ENCODE measurements at regions of chr7 and their contacts with region 1.

Region 1: GRCh38 chr7:44999245-45000095 is 531 bp upstream of the CCM2 start:
- DNase-seq: peak; percentile 97 to 99 (median 99)
- ATAC-seq: peak; percentile 81
- H3K4me3 ChIP-seq: peak overlapping the region; percentile 59 to 75
- H3K4me3 Mint-ChIP-seq: peak overlapping the region; percentile 99
- H3K27ac ChIP-seq: peak overlapping the region; percentile 70
- H3K27ac Mint-ChIP-seq: peak overlapping the region; percentile 98
- H3K4me1 ChIP-seq: peaks cover 36% of the 10 kb centered on the region
- H3K4me1 Mint-ChIP-seq: peaks cover 51% of the 10 kb centered on the region
- H3K27me3 ChIP-seq: no peaks in the 10 kb centered on the region
- H3K27me3 Mint-ChIP-seq: no peaks in the 10 kb centered on the region
- CTCF ChIP-seq: no peak

Region 2: DNA sequence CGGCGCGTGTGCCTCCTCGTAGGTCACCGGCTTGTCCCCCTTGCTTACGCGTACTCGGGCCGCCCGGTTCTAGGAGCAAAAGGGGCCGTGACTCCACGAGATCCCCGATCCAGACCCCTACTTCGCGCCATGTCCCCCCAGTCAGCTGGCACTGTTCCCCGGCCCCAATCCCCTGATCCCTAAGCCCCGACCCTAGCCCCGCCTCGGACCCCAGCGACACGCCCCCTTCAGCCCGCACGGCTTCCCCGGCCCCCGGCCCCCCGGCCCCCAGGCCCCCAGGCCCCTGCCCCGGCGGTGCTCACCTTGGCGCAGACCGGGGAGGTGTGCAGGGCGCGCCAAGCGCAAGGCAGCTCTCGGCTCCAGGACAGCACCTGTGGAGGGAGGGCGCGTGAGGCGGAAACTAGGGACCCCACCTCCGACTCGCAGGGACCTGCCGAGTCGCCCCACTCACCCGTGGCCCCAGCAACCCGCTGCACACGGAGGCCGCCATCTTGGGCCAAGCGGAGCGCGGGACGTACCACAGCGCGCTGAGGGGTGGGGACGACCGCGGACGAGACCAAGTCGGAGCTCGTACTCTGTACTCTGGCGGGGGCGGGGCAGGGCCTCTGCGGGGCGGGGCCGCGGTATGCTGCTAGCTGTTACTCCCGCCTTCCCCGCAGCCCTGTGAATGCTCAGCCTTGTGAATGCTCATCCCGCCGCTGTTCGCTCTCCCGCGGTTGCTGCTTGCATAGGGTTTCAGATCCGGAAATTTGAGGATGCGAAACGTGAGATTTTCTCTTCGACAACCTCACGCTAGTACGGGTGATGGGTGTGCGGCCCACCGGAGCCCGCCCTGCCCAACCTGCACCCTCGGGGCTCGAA is 1130.2 kb before region 1 on chr7 and contains the start of gene MRPS24:
- CTCF ChIA-PET with region 1: no interaction called
- POLR2A ChIA-PET with region 1: no interaction called
- intact Hi-C with region 1: no loop called
- DNase-seq: peak; percentile 91 to 97 (median 95)
- ATAC-seq: peak; percentile 100
- H3K4me3 ChIP-seq: peak within 1 kb of the TSS; percentile 69 to 76
- H3K4me3 Mint-ChIP-seq: peak within 1 kb of the TSS; percentile 94
- H3K27ac ChIP-seq: peak within 1 kb of the TSS; percentile 50 to 69
- H3K27ac Mint-ChIP-seq: peak within 1 kb of the TSS; percentile 93
- H3K4me1 ChIP-seq: peaks cover 14% of the 10 kb centered on the region
- H3K4me1 Mint-ChIP-seq: peaks cover 23% of the 10 kb centered on the region
- H3K27me3 ChIP-seq: no peaks in the 10 kb centered on the region
- H3K27me3 Mint-ChIP-seq: no peaks in the 10 kb centered on the region
- CTCF ChIP-seq: no peak
- total RNA-seq, gene MRPS24: 61.7 to 74.4 TPM

Region 3: GRCh38 chr7:44123190-44124003 is 876.1 kb before region 1 on chr7 and contains the start of gene POLD2:
- CTCF ChIA-PET with region 1: no interaction called
- POLR2A ChIA-PET with region 1: no interaction called
- intact Hi-C with region 1: loop called in 1 of 2 experiments (anchors 10 kb)
- DNase-seq: peak; percentile 93 to 98 (median 97)
- ATAC-seq: peak; percentile 98
- H3K4me3 ChIP-seq: peak within 1 kb of the TSS; percentile 78 to 83
- H3K4me3 Mint-ChIP-seq: peak within 1 kb of the TSS; percentile 93
- H3K27ac ChIP-seq: peak within 1 kb of the TSS; percentile 75 to 79
- H3K27ac Mint-ChIP-seq: peak within 1 kb of the TSS; percentile 66
- H3K4me1 ChIP-seq: peaks cover 12% of the 10 kb centered on the region
- H3K4me1 Mint-ChIP-seq: peaks cover 34% of the 10 kb centered on the region
- H3K27me3 ChIP-seq: no peaks in the 10 kb centered on the region
- H3K27me3 Mint-ChIP-seq: no peaks in the 10 kb centered on the region
- CTCF ChIP-seq: no peak
- total RNA-seq, gene POLD2: 44.0 to 48.9 TPM

Region 4: GRCh38 chr7:44885394-44886317 is 113.8 kb before region 1 on chr7 and contains the start of gene PURB:
- CTCF ChIA-PET with region 1: interaction called, 3 read pairs
- POLR2A ChIA-PET with region 1: interaction called, 5 read pairs
- intact Hi-C with region 1: loop called in 1 of 2 experiments (anchors 1 kb)
- DNase-seq: peak; percentile 94 to 99 (median 97)
- ATAC-seq: peak; percentile 86
- H3K4me3 ChIP-seq: peak within 1 kb of the TSS; percentile 64 to 67
- H3K4me3 Mint-ChIP-seq: peak within 1 kb of the TSS; percentile 92
- H3K27ac ChIP-seq: peak within 1 kb of the TSS; percentile 98 to 100
- H3K27ac Mint-ChIP-seq: peak within 1 kb of the TSS; percentile 99
- H3K4me1 ChIP-seq: peaks cover 36% of the 10 kb centered on the region
- H3K4me1 Mint-ChIP-seq: peaks cover 45% of the 10 kb centered on the region
- H3K27me3 ChIP-seq: no peaks in the 10 kb centered on the region
- H3K27me3 Mint-ChIP-seq: no peaks in the 10 kb centered on the region
- CTCF ChIP-seq: no peak
- total RNA-seq, gene PURB: 16.3 to 16.5 TPM

Region 5: GRCh38 chr7:44980393-44981034 is 19.0 kb before region 1 on chr7:
- CTCF ChIA-PET with region 1: interaction called, 52 read pairs
- POLR2A ChIA-PET with region 1: interaction called, 22 read pairs
- intact Hi-C with region 1: loop called (anchors 1 kb)
- DNase-seq: peak in 6 of 9 experiments; percentile 40 to 95 (median 76)
- ATAC-seq: peak; percentile 43
- H3K4me3 ChIP-seq: no peak overlapping the region
- H3K4me3 Mint-ChIP-seq: peak overlapping the region; percentile 94
- H3K27ac ChIP-seq: peak overlapping the region; percentile 78 to 86
- H3K27ac Mint-ChIP-seq: peak overlapping the region; percentile 99
- H3K4me1 ChIP-seq: peaks cover 72% of the 10 kb centered on the region
- H3K4me1 Mint-ChIP-seq: peaks cover 80% of the 10 kb centered on the region
- H3K27me3 ChIP-seq: no peaks in the 10 kb centered on the region
- H3K27me3 Mint-ChIP-seq: no peaks in the 10 kb centered on the region
- CTCF ChIP-seq: no peak

Region 6: GRCh38 chr7:45026984-45027773 is 27.7 kb after region 1 on chr7:
- CTCF ChIA-PET with region 1: interaction called, 25 read pairs
- POLR2A ChIA-PET with region 1: interaction called, 111 read pairs
- intact Hi-C with region 1: loop called (anchors 1 to 2 kb)
- DNase-seq: peak in 7 of 9 experiments; percentile 26 to 75 (median 46)
- ATAC-seq: peak; percentile 63
- H3K4me3 ChIP-seq: peak overlapping the region; percentile 74 to 81
- H3K4me3 Mint-ChIP-seq: peak overlapping the region; percentile 87
- H3K27ac ChIP-seq: peak overlapping the region; percentile 73 to 80
- H3K27ac Mint-ChIP-seq: peak overlapping the region; percentile 91
- H3K4me1 ChIP-seq: peaks cover 42% of the 10 kb centered on the region
- H3K4me1 Mint-ChIP-seq: peaks cover 64% of the 10 kb centered on the region
- H3K27me3 ChIP-seq: no peaks in the 10 kb centered on the region
- H3K27me3 Mint-ChIP-seq: no peaks in the 10 kb centered on the region
- CTCF ChIP-seq: no peak

Region 7: GRCh38 chr7:45136106-45137060 is 136.9 kb after region 1 on chr7:
- CTCF ChIA-PET with region 1: interaction called, 8 read pairs
- POLR2A ChIA-PET with region 1: no interaction called
- intact Hi-C with region 1: loop called in 1 of 2 experiments (anchors 1 kb)
- DNase-seq: peak; percentile 41 to 89 (median 66)
- ATAC-seq: peak; percentile 97
- H3K4me3 ChIP-seq: no peak overlapping the region
- H3K4me3 Mint-ChIP-seq: no peak overlapping the region
- H3K27ac ChIP-seq: no peak overlapping the region
- H3K27ac Mint-ChIP-seq: no peak overlapping the region
- H3K4me1 ChIP-seq: peaks cover 3% of the 10 kb centered on the region
- H3K4me1 Mint-ChIP-seq: peaks cover 4% of the 10 kb centered on the region
- H3K27me3 ChIP-seq: no peaks in the 10 kb centered on the region
- H3K27me3 Mint-ChIP-seq: peaks cover 4% of the 10 kb centered on the region
- CTCF ChIP-seq: peak; percentile 92